ENCODE measurements at regions of chr11 and their contacts with region 1.

Region 1: GRCh38 chr11:76919887-76920746 is 59.4 kb downstream of the ACER3 start:
- DNase-seq: peak; percentile 79 to 92 (median 89)
- ATAC-seq: peak; percentile 91
- H3K4me3 ChIP-seq: no peak overlapping the region
- H3K27ac ChIP-seq: peak overlapping the region in 2 of 4 donors; percentile 63 to 72
- H3K4me1 ChIP-seq: peaks cover 24% of the 10 kb centered on the region
- H3K27me3 ChIP-seq: no peaks in the 10 kb centered on the region
- CTCF ChIP-seq: peak; percentile 91 to 97 (median 95)
- POLR2A ChIP-seq: no peak

Region 2: GRCh38 chr11:76810151-76810853 is 109.8 kb before region 1 on chr11:
- intact Hi-C with region 1: loop called (anchors 5 kb)
- DNase-seq: peak in 3 of 4 donors; percentile 57 to 66 (median 60)
- ATAC-seq: peak; percentile 61
- H3K4me3 ChIP-seq: no peak overlapping the region
- H3K27ac ChIP-seq: no peak overlapping the region
- H3K4me1 ChIP-seq: peaks cover 7% of the 10 kb centered on the region
- H3K27me3 ChIP-seq: no peaks in the 10 kb centered on the region
- CTCF ChIP-seq: peak; percentile 40 to 76 (median 66)
- POLR2A ChIP-seq: no peak

Region 3: DNA sequence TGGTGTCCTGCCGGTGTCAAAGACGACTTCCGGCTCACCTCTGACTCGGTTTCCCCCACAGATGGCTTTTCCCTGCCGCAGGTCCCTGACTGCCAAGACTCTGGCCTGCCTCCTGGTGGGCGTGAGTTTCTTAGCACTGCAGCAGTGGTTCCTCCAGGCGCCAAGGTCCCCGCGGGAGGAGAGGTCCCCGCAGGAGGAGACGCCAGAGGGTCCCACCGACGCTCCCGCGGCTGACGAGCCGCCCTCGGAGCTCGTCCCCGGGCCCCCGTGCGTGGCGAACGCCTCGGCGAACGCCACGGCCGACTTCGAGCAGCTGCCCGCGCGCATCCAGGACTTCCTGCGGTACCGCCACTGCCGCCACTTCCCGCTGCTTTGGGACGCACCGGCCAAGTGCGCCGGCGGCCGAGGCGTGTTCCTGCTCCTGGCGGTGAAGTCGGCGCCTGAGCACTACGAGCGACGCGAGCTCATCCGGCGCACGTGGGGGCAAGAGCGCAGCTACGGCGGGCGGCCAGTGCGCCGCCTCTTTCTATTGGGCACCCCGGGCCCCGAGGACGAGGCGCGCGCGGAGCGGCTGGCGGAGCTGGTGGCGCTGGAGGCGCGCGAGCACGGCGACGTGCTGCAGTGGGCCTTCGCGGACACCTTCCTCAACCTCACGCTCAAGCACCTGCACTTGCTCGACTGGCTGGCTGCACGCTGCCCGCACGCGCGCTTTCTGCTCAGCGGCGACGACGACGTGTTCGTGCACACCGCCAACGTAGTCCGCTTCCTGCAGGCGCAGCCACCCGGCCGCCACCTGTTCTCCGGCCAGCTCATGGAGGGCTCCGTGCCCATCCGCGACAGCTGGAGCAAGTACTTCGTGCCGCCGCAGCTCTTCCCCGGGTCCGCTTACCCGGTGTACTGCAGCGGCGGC is 119.6 kb after region 1 on chr11:
- intact Hi-C with region 1: loop called (anchors 5 kb)
- DNase-seq: peak; percentile 44 to 70 (median 53)
- ATAC-seq: peak; percentile 52
- H3K4me3 ChIP-seq: no peak overlapping the region
- H3K27ac ChIP-seq: no peak overlapping the region
- H3K4me1 ChIP-seq: peaks cover 26% of the 10 kb centered on the region
- H3K27me3 ChIP-seq: peaks cover 0 to 5% of the 10 kb centered on the region in 2 donors
- CTCF ChIP-seq: peak; percentile 26 to 57 (median 45)
- POLR2A ChIP-seq: no peak

Region 4: GRCh38 chr11:77091146-77091940 is 171.2 kb after region 1 on chr11:
- intact Hi-C with region 1: loop called (anchors 10 kb)
- DNase-seq: peak; percentile 86 to 90 (median 88)
- ATAC-seq: peak; percentile 87
- H3K4me3 ChIP-seq: no peak overlapping the region
- H3K27ac ChIP-seq: no peak overlapping the region
- H3K4me1 ChIP-seq: peaks cover 39% of the 10 kb centered on the region
- H3K27me3 ChIP-seq: no peaks in the 10 kb centered on the region
- CTCF ChIP-seq: peak; percentile 83 to 97 (median 95)
- POLR2A ChIP-seq: no peak

Measured in body of pancreas (tissue), 4 donors.